ENCODE measurements at regions of chr3 and their contacts with region 1.

Region 1: DNA sequence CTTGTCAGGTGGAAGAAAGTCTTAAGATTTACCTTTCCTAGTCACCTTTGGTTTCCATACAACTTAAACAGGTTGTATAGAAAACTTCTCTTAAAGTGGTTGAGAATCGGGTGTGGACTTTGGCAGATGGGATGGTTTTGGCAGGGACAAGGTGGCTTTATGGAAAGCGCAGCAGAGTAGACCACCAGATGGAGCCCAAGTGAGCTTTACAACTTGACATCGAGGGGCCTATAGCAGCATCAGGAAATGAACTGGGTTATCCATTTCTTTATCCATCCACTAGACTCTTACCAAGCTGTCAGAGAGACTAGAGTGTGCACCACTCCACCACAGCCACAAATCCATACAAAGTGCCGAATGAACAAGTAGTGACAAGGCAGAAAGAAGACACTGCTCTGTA is 85.3 kb upstream of the MBNL1 start:
- DNase-seq: peak; percentile 43 to 56 (median 55)
- H3K4me3 ChIP-seq: no peak overlapping the region
- H3K4me3 Mint-ChIP-seq: peak overlapping the region in 7 of 8 donors; percentile 7 to 50 (median 32)
- H3K27ac ChIP-seq: no peak overlapping the region
- H3K27ac Mint-ChIP-seq: peak overlapping the region in 5 of 7 donors; percentile 8 to 83 (median 61)
- H3K4me1 ChIP-seq: peaks cover 53% of the 10 kb centered on the region
- H3K4me1 Mint-ChIP-seq: peaks cover 29 to 48% (median 39%) of the 10 kb centered on the region in 4 donors
- H3K27me3 ChIP-seq: no peaks in the 10 kb centered on the region
- H3K27me3 Mint-ChIP-seq: no peaks in the 10 kb centered on the region

Region 2: GRCh38 chr3:152193673-152194267 is 10.3 kb after region 1 on chr3:
- CTCF ChIA-PET with region 1: interaction called, 17 read pairs
- POLR2A ChIA-PET with region 1: interaction called, 40 read pairs
- intact Hi-C with region 1: no loop called
- DNase-seq: peak; percentile 63 to 79 (median 68)
- H3K4me3 ChIP-seq: peak overlapping the region; percentile 31 to 37
- H3K4me3 Mint-ChIP-seq: peak overlapping the region; percentile 81 to 97 (median 90)
- H3K27ac ChIP-seq: peak overlapping the region; percentile 62
- H3K27ac Mint-ChIP-seq: peak overlapping the region; percentile 89 to 98 (median 92)
- H3K4me1 ChIP-seq: peaks cover 82% of the 10 kb centered on the region
- H3K4me1 Mint-ChIP-seq: peaks cover 60 to 85% (median 72%) of the 10 kb centered on the region in 4 donors
- H3K27me3 ChIP-seq: no peaks in the 10 kb centered on the region
- H3K27me3 Mint-ChIP-seq: no peaks in the 10 kb centered on the region

Region 3: DNA sequence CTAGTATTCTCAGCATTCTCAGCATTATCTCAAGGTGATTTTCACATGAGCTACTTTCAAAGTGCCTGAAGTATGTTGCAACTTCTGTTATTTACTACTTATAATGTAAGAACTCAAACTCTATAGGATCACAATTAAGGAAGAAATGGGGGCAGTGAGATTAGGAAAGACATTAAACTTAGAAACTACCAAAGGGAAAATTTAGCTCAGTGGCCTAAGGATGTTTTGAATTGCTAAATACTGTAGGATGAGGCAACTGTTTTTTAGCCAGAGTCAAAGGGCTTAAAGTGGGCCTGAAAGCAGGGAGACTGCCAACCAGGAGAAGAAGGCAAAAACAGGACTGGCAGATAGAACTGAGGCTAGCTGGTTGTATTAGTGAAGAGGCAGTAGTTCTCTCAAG is 29.7 kb after region 1 on chr3:
- CTCF ChIA-PET with region 1: interaction called, 10 read pairs
- POLR2A ChIA-PET with region 1: no interaction called
- intact Hi-C with region 1: no loop called
- DNase-seq: no peak
- H3K4me3 ChIP-seq: no peak overlapping the region
- H3K4me3 Mint-ChIP-seq: peak overlapping the region in 2 of 8 donors; percentile 13 to 33
- H3K27ac ChIP-seq: no peak overlapping the region
- H3K27ac Mint-ChIP-seq: peak overlapping the region; percentile 1 to 80 (median 18)
- H3K4me1 ChIP-seq: peaks cover 50% of the 10 kb centered on the region
- H3K4me1 Mint-ChIP-seq: peaks cover 45 to 65% (median 56%) of the 10 kb centered on the region in 4 donors
- H3K27me3 ChIP-seq: no peaks in the 10 kb centered on the region
- H3K27me3 Mint-ChIP-seq: no peaks in the 10 kb centered on the region

Region 4: GRCh38 chr3:152281133-152281713 is 97.8 kb after region 1 on chr3:
- CTCF ChIA-PET with region 1: interaction called, 17 read pairs
- POLR2A ChIA-PET with region 1: interaction called, 17 read pairs
- intact Hi-C with region 1: no loop called
- DNase-seq: no peak
- H3K4me3 ChIP-seq: no peak overlapping the region
- H3K4me3 Mint-ChIP-seq: peak overlapping the region; percentile 15 to 87 (median 70)
- H3K27ac ChIP-seq: peak overlapping the region; percentile 61
- H3K27ac Mint-ChIP-seq: peak overlapping the region; percentile 62 to 88 (median 76)
- H3K4me1 ChIP-seq: peaks cover 97% of the 10 kb centered on the region
- H3K4me1 Mint-ChIP-seq: peaks cover 61 to 85% (median 72%) of the 10 kb centered on the region in 4 donors
- H3K27me3 ChIP-seq: no peaks in the 10 kb centered on the region
- H3K27me3 Mint-ChIP-seq: no peaks in the 10 kb centered on the region

Region 5: GRCh38 chr3:152331018-152331541 is 147.6 kb after region 1 on chr3:
- CTCF ChIA-PET with region 1: interaction called, 13 read pairs
- POLR2A ChIA-PET with region 1: interaction called, 3 read pairs
- intact Hi-C with region 1: no loop called
- DNase-seq: no peak
- H3K4me3 ChIP-seq: no peak overlapping the region
- H3K4me3 Mint-ChIP-seq: peak overlapping the region in 6 of 8 donors; percentile 20 to 76 (median 32)
- H3K27ac ChIP-seq: peak overlapping the region; percentile 28
- H3K27ac Mint-ChIP-seq: peak overlapping the region; percentile 35 to 92 (median 79)
- H3K4me1 ChIP-seq: peaks cover 96% of the 10 kb centered on the region
- H3K4me1 Mint-ChIP-seq: peaks cover 59 to 90% (median 75%) of the 10 kb centered on the region in 4 donors
- H3K27me3 ChIP-seq: no peaks in the 10 kb centered on the region
- H3K27me3 Mint-ChIP-seq: no peaks in the 10 kb centered on the region

Region 6: GRCh38 chr3:152524198-152525140 is 341.0 kb after region 1 on chr3:
- CTCF ChIA-PET with region 1: no interaction called
- POLR2A ChIA-PET with region 1: no interaction called
- intact Hi-C with region 1: loop called (anchors 2 kb)
- DNase-seq: peak in 4 of 5 donors; percentile 25 to 43 (median 37)
- H3K4me3 ChIP-seq: no peak overlapping the region
- H3K4me3 Mint-ChIP-seq: no peak overlapping the region
- H3K27ac ChIP-seq: no peak overlapping the region
- H3K27ac Mint-ChIP-seq: no peak overlapping the region
- H3K4me1 ChIP-seq: no peaks in the 10 kb centered on the region
- H3K4me1 Mint-ChIP-seq: no peaks in the 10 kb centered on the region
- H3K27me3 ChIP-seq: no peaks in the 10 kb centered on the region
- H3K27me3 Mint-ChIP-seq: no peaks in the 10 kb centered on the region